ENCODE measurements at regions of chr10 and their contacts with region 1.

Region 1: GRCh38 chr10:27319752-27320561 is 79.4 kb upstream of the ACBD5 start:
- DNase-seq: no peak
- H3K4me3 ChIP-seq: peak overlapping the region; percentile 31 to 46 (median 44)
- H3K27ac ChIP-seq: peak overlapping the region in 3 of 4 donors; percentile 55 to 76 (median 56)
- H3K4me1 ChIP-seq: peaks cover 0 to 10% (median 4%) of the 10 kb centered on the region in 4 donors
- H3K27me3 ChIP-seq: peaks cover 0 to 16% (median 4%) of the 10 kb centered on the region in 4 donors
- CTCF ChIP-seq: no peak
- EP300 ChIP-seq: no peak
- POLR2A ChIP-seq: no peak

Region 2: GRCh38 chr10:26574783-26575182 is 745.2 kb before region 1 on chr10:
- intact Hi-C with region 1: loop called (anchors 5 kb)
- DNase-seq: no peak
- H3K4me3 ChIP-seq: no peak overlapping the region
- H3K27ac ChIP-seq: no peak overlapping the region
- H3K4me1 ChIP-seq: no peaks in the 10 kb centered on the region
- H3K27me3 ChIP-seq: peaks cover 0 to 5% (median 0%) of the 10 kb centered on the region in 4 donors
- CTCF ChIP-seq: no peak
- EP300 ChIP-seq: no peak
- POLR2A ChIP-seq: no peak

Region 3: DNA sequence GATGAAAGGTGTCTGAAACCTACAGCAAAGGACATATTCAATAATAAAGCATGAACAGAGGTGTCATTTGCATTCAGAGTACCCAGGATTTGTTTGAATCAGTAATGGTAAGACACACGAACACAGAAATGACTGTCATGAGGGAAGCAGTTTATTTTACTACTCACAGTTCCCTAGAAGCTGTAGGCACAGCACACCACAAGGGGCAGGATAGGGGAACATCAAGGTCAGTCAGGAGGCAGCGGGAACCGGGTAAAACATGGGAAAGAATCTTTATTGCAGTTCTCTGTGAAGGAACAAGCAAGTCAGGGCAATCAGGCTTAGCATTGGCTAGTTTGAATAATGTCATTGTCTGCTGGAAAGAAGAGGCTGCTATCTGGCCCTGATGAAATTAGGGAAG is 692.6 kb before region 1 on chr10:
- intact Hi-C with region 1: loop called (anchors 5 kb)
- DNase-seq: no peak
- H3K4me3 ChIP-seq: no peak overlapping the region
- H3K27ac ChIP-seq: no peak overlapping the region
- H3K4me1 ChIP-seq: peaks cover 0 to 6% (median 2%) of the 10 kb centered on the region in 4 donors
- H3K27me3 ChIP-seq: peaks cover 0 to 44% (median under 1%) of the 10 kb centered on the region in 4 donors
- CTCF ChIP-seq: no peak
- EP300 ChIP-seq: no peak
- POLR2A ChIP-seq: no peak

Region 4: GRCh38 chr10:27192284-27192683 is 127.7 kb before region 1 on chr10:
- intact Hi-C with region 1: no loop called
- DNase-seq: no peak
- H3K4me3 ChIP-seq: no peak overlapping the region
- H3K27ac ChIP-seq: no peak overlapping the region
- H3K4me1 ChIP-seq: peaks cover 0 to 1% (median 0%) of the 10 kb centered on the region in 4 donors
- H3K27me3 ChIP-seq: no peaks in the 10 kb centered on the region
- CTCF ChIP-seq: no peak
- EP300 ChIP-seq: no peak
- POLR2A ChIP-seq: no peak

Region 5: DNA sequence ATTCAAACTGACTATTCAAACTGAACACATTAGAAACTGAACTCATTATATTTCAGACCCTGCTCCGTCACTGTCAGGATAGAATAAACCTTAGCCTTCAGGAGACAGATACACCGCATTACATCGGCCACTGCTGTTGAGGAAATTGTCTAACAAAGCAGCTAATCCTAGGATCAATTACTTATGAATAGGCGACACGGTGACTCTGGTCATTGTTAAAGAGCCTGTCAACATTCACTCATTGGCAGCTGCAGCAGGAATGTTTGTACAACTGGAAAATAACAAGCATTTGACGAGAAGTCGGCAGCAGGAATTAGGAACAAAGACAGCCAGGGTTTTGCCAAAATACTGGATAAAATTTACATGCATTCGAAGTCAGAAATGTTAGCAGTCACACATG is 537.7 kb after region 1 on chr10:
- intact Hi-C with region 1: no loop called
- DNase-seq: no peak
- H3K4me3 ChIP-seq: no peak overlapping the region
- H3K27ac ChIP-seq: no peak overlapping the region
- H3K4me1 ChIP-seq: peaks cover 0 to 8% (median 6%) of the 10 kb centered on the region in 4 donors
- H3K27me3 ChIP-seq: no peaks in the 10 kb centered on the region
- CTCF ChIP-seq: no peak
- EP300 ChIP-seq: no peak
- POLR2A ChIP-seq: no peak

Measured in esophagus muscularis mucosa (tissue), 4 donors.